ENCODE measurements at regions of chr9 and their contacts with region 1.

Region 1: DNA sequence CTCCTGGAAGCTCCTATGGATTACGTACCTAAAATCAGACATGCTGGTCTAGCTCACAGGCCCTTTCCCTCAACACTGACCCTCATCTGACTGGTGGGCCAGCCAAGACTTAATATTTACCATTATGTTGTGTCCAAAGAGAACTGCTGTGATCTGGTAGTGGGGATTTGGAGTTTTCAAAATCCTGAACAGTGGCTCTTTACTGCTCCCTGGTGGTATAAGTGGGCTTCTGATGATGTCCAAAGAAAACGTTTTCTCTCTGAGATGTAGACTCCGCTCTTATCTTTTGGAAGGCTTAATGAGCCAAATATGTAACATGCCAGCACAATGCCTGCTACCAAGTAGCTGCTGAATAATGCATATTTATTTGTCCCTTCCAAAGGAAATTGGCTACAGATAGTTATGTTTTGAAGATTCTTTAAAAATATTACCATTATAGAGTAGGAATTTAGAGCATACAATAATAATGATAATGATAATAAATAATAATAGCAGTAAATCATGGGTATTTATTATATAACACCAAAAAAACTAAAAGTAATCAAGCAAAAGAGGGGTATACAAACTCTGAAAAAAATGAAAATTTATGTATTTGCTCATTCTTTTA is 406.6 kb upstream of the TNC start:
- DNase-seq: no peak
- ATAC-seq: peak; percentile 69
- H3K4me3 ChIP-seq: no peak overlapping the region
- H3K27ac ChIP-seq: no peak overlapping the region
- H3K4me1 ChIP-seq: no peaks in the 10 kb centered on the region
- H3K27me3 ChIP-seq: no peaks in the 10 kb centered on the region
- CTCF ChIP-seq: peak; percentile 54 to 68 (median 59); a peak in 5 of 6 replicates
- EP300 ChIP-seq: no peak
- POLR2A ChIP-seq: no peak
- RAD21 ChIP-seq: peak; percentile 84

Region 2: GRCh38 chr9:114738581-114739316 is 785.8 kb before region 1 on chr9:
- CTCF ChIA-PET with region 1: no interaction called
- POLR2A ChIA-PET with region 1: no interaction called
- RAD21 ChIA-PET with region 1: no interaction called
- SMC1A ChIA-PET with region 1: interaction called, 5 read pairs
- in situ Hi-C with region 1: loop called (anchors 10 kb)
- intact Hi-C with region 1: loop called (anchors 2 kb)
- DNase-seq: peak; percentile 24
- ATAC-seq: peak; percentile 95
- H3K4me3 ChIP-seq: no peak overlapping the region
- H3K27ac ChIP-seq: no peak overlapping the region
- H3K4me1 ChIP-seq: no peaks in the 10 kb centered on the region
- H3K27me3 ChIP-seq: peaks cover 1 to 3% of the 10 kb centered on the region in 2 experiments; a peak in 2 of 4 replicates
- CTCF ChIP-seq: peak; percentile 76 to 88 (median 82)
- EP300 ChIP-seq: no peak
- POLR2A ChIP-seq: no peak
- RAD21 ChIP-seq: peak; percentile 98

Region 3: DNA sequence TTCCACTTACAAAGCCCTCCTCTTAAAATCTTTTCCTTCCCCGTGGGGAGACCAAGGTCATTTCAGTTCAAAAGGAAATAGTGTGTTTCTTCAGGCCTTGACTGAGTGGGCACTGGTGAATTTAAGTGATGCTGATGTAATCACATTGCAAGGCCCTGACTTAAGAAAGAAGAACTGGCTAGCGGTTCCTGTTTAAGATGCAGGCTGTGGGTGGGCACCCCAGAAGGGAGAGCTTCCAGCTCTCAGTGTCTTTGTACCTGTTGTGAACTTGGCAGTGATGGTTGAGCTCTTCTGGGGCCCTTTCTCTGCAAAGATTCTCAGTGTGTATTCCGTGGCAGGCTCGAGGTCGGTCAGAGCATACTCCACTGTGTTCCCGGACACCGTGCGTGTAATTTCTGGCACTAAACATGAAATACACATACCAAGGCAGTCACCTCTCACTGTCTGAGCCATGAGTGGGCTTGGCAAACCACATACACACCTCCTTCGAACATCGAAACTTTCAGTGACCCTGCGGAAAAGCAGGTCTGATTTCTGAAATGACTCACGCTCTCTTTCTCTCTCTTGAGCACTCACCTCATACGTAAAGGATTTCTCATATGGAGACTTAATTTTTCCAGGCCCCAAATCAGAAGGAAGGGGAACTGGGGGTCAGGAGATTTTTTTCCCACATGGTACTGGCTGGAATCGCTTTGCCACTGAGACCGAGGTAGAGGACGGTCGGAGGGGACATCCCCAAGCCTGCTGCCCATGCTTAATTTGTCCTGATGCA is 488.5 kb before region 1 on chr9:
- CTCF ChIA-PET with region 1: interaction called, 3 read pairs
- POLR2A ChIA-PET with region 1: no interaction called
- RAD21 ChIA-PET with region 1: no interaction called
- SMC1A ChIA-PET with region 1: no interaction called
- in situ Hi-C with region 1: no loop called
- intact Hi-C with region 1: loop called (anchors 5 kb)
- DNase-seq: peak; percentile 77
- ATAC-seq: peak; percentile 90
- H3K4me3 ChIP-seq: no peak overlapping the region
- H3K27ac ChIP-seq: no peak overlapping the region
- H3K4me1 ChIP-seq: peaks cover 17% of the 10 kb centered on the region
- H3K27me3 ChIP-seq: no peaks in the 10 kb centered on the region; a peak in 2 of 4 replicates
- CTCF ChIP-seq: no peak
- EP300 ChIP-seq: peak; percentile 56 to 90; a peak in 2 of 4 replicates
- POLR2A ChIP-seq: no peak
- RAD21 ChIP-seq: no peak

Region 4: GRCh38 chr9:115226127-115226526 is 298.4 kb before region 1 on chr9:
- CTCF ChIA-PET with region 1: interaction called, 15 read pairs
- POLR2A ChIA-PET with region 1: no interaction called
- RAD21 ChIA-PET with region 1: interaction called, 4 read pairs
- SMC1A ChIA-PET with region 1: interaction called, 7 read pairs
- in situ Hi-C with region 1: no loop called
- intact Hi-C with region 1: loop called (anchors 1 kb)
- DNase-seq: no peak
- ATAC-seq: no peak
- H3K4me3 ChIP-seq: no peak overlapping the region
- H3K27ac ChIP-seq: no peak overlapping the region
- H3K4me1 ChIP-seq: no peaks in the 10 kb centered on the region
- H3K27me3 ChIP-seq: no peaks in the 10 kb centered on the region
- CTCF ChIP-seq: peak in 1 of 3 experiments; percentile 24; a peak in 1 of 6 replicates
- EP300 ChIP-seq: no peak
- POLR2A ChIP-seq: no peak
- RAD21 ChIP-seq: 0 out of 2 replicates have a peak, but pooled peaks have one; percentile 5

Region 5: DNA sequence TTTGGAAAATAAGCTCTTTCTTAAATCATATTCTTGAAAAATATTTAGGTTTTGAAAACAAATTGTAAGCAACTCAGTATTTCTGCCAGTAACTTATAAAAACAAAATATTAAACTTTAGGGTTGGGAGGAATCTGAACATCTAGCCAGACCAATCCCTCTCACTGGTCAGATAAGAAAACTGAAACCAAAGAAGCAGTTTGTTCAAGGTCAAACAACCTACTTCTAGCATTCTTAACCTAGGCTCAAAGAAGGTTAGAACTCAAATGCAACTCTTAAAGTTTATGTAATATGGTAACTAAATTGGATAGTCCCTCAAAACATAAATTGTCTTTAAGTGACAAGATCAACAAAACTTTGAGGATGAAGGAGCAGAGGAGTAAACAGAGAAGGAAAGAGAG is 31.7 kb before region 1 on chr9:
- CTCF ChIA-PET with region 1: no interaction called
- POLR2A ChIA-PET with region 1: no interaction called
- RAD21 ChIA-PET with region 1: no interaction called
- SMC1A ChIA-PET with region 1: no interaction called
- in situ Hi-C with region 1: no loop called
- intact Hi-C with region 1: no loop called
- DNase-seq: no peak
- ATAC-seq: no peak
- H3K4me3 ChIP-seq: no peak overlapping the region
- H3K27ac ChIP-seq: no peak overlapping the region
- H3K4me1 ChIP-seq: no peaks in the 10 kb centered on the region
- H3K27me3 ChIP-seq: no peaks in the 10 kb centered on the region
- CTCF ChIP-seq: no peak
- EP300 ChIP-seq: no peak
- POLR2A ChIP-seq: no peak
- RAD21 ChIP-seq: no peak

Region 6: GRCh38 chr9:115604831-115605483 is 80.4 kb after region 1 on chr9:
- CTCF ChIA-PET with region 1: no interaction called
- POLR2A ChIA-PET with region 1: no interaction called
- RAD21 ChIA-PET with region 1: no interaction called
- SMC1A ChIA-PET with region 1: no interaction called
- in situ Hi-C with region 1: no loop called
- intact Hi-C with region 1: no loop called
- DNase-seq: no peak
- ATAC-seq: no peak
- H3K4me3 ChIP-seq: no peak overlapping the region
- H3K27ac ChIP-seq: no peak overlapping the region
- H3K4me1 ChIP-seq: no peaks in the 10 kb centered on the region
- H3K27me3 ChIP-seq: no peaks in the 10 kb centered on the region
- CTCF ChIP-seq: no peak
- EP300 ChIP-seq: no peak
- POLR2A ChIP-seq: no peak
- RAD21 ChIP-seq: no peak

Region 7: DNA sequence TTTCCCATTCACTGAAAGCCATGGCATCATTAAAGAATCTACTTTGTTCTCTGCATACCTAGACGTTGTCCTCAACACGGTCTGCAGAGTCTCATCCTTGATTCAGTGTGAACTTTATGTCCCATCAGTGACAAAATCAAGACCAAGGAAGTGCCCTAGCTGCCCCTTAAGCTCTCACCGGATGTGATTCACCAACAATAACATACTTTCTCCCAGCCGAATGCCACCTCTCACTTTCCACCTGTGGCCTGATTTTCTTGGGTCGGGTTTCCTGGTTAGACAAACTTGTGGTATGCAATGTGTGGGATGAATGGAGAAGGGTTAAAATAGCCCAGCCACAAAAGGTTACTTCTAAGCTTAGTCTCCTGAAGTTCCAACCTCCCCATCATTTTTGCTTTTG is 483.7 kb after region 1 on chr9:
- CTCF ChIA-PET with region 1: no interaction called
- POLR2A ChIA-PET with region 1: no interaction called
- RAD21 ChIA-PET with region 1: no interaction called
- SMC1A ChIA-PET with region 1: no interaction called
- in situ Hi-C with region 1: no loop called
- intact Hi-C with region 1: no loop called
- DNase-seq: no peak
- ATAC-seq: no peak
- H3K4me3 ChIP-seq: no peak overlapping the region
- H3K27ac ChIP-seq: no peak overlapping the region
- H3K4me1 ChIP-seq: no peaks in the 10 kb centered on the region
- H3K27me3 ChIP-seq: no peaks in the 10 kb centered on the region
- CTCF ChIP-seq: no peak
- EP300 ChIP-seq: no peak
- POLR2A ChIP-seq: no peak
- RAD21 ChIP-seq: no peak